GM10248 (cell line): ENCODE measurements at regions of chr2 and their contacts with region 1.

Region 1: GRCh38 chr2:197345846-197346370 is 35.3 kb upstream of the ANKRD44 start:
- DNase-seq: no peak
- CTCF ChIP-seq: no peak

Region 2: DNA sequence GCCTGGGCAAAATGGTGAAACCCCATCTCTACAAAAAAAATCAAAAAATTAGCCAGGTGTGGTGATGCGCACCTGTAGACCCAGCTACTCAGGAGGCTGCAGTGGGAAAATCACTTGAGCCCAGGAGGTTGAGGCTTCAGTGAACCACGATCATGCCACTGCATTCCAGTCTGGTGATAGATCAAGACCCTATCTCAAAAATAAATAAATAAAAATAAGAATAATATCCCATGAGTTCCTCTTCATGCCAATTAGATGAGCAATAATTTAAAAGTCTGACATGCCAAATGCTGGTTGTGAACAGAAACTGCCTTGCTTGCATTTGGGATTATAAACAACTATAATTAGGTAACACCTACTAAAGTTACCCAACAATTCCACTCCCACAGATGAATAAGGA is 13.3 kb before region 1 on chr2:
- CTCF ChIA-PET with region 1: interaction called, 11 read pairs
- POLR2A ChIA-PET with region 1: no interaction called
- DNase-seq: no peak
- CTCF ChIP-seq: no peak